Gastrocnemius medialis (tissue), 4 donors: ENCODE measurements at regions of chr19 and their contacts with region 1.

Region 1: DNA sequence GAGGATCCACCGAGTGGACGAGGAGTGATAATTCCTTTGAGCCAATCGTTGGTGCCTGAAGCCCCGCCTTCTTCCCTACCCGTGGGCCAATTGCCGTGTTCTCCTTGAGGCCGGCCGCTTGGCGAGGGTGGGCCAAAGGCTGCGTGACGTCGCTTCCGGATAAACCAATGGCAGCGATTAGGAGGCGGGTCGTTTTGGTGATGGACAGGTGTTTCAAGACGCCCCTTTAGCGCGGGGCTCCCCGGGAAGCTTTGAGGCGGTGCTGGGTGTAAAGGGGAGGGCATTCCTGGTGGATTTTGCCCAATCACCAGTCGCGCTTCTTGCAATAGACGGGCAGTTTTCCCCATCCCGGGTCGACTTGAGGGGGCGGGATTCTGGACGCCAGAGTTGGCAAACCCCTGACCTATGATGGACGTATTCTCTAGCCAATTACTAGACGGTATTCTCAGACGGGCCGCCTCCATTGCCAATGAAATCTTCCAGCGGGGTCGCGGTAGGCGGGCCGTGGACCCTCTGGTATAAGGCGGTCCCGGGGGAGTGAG is 310 bp upstream of the PRMT1 start:
- DNase-seq: peak; percentile 100
- ATAC-seq: peak; percentile 75 to 83
- H3K4me3 ChIP-seq: peak overlapping the region; percentile 78 to 99 (median 95)
- H3K27ac ChIP-seq: peak overlapping the region; percentile 98 to 100 (median 99)
- H3K4me1 ChIP-seq: peaks cover 42 to 53% of the 10 kb centered on the region in 2 donors
- H3K27me3 ChIP-seq: no peaks in the 10 kb centered on the region
- CTCF ChIP-seq: no peak
- POLR2A ChIP-seq: no peak

Region 2: GRCh38 chr19:48965806-48966540 is 710.8 kb before region 1 on chr19:
- in situ Hi-C with region 1: no loop called
- intact Hi-C with region 1: no loop called
- DNase-seq: peak; percentile 89 to 93
- ATAC-seq: peak; percentile 65 to 70
- H3K4me3 ChIP-seq: peak overlapping the region; percentile 95 to 97 (median 96)
- H3K27ac ChIP-seq: peak overlapping the region; percentile 89 to 99 (median 98)
- H3K4me1 ChIP-seq: peaks cover 35 to 48% of the 10 kb centered on the region in 2 donors
- H3K27me3 ChIP-seq: no peaks in the 10 kb centered on the region
- CTCF ChIP-seq: no peak
- POLR2A ChIP-seq: no peak

Region 3: GRCh38 chr19:49451430-49452181 is 225.2 kb before region 1 on chr19 and contains the start of gene PIH1D1:
- in situ Hi-C with region 1: no loop called
- intact Hi-C with region 1: loop called (anchors 2 kb)
- DNase-seq: peak; percentile 99
- ATAC-seq: peak; percentile 87 to 89
- H3K4me3 ChIP-seq: peak within 1 kb of the TSS; percentile 67 to 100 (median 90)
- H3K27ac ChIP-seq: peak within 1 kb of the TSS; percentile 90 to 97 (median 96)
- H3K4me1 ChIP-seq: peaks cover 15 to 26% of the 10 kb centered on the region in 2 donors
- H3K27me3 ChIP-seq: no peaks in the 10 kb centered on the region
- CTCF ChIP-seq: peak in 3 of 5 experiments; percentile 9 to 46 (median 35)
- POLR2A ChIP-seq: peak in 1 of 2 donors; percentile 53
- total RNA-seq, gene PIH1D1: 41.9 to 107 (median 79.0) TPM

Region 4: GRCh38 chr19:49506575-49507105 is 170.1 kb before region 1 on chr19:
- in situ Hi-C with region 1: loop called in 1 of 4 experiments (anchors 5 kb)
- intact Hi-C with region 1: loop called (anchors 1 kb)
- DNase-seq: peak in 1 of 2 donors; percentile 50
- ATAC-seq: peak; percentile 25 to 71
- H3K4me3 ChIP-seq: no peak overlapping the region
- H3K27ac ChIP-seq: no peak overlapping the region
- H3K4me1 ChIP-seq: peaks cover 5 to 7% of the 10 kb centered on the region in 2 donors
- H3K27me3 ChIP-seq: no peaks in the 10 kb centered on the region
- CTCF ChIP-seq: peak; percentile 72 to 93 (median 81)
- POLR2A ChIP-seq: no peak

Region 5: DNA sequence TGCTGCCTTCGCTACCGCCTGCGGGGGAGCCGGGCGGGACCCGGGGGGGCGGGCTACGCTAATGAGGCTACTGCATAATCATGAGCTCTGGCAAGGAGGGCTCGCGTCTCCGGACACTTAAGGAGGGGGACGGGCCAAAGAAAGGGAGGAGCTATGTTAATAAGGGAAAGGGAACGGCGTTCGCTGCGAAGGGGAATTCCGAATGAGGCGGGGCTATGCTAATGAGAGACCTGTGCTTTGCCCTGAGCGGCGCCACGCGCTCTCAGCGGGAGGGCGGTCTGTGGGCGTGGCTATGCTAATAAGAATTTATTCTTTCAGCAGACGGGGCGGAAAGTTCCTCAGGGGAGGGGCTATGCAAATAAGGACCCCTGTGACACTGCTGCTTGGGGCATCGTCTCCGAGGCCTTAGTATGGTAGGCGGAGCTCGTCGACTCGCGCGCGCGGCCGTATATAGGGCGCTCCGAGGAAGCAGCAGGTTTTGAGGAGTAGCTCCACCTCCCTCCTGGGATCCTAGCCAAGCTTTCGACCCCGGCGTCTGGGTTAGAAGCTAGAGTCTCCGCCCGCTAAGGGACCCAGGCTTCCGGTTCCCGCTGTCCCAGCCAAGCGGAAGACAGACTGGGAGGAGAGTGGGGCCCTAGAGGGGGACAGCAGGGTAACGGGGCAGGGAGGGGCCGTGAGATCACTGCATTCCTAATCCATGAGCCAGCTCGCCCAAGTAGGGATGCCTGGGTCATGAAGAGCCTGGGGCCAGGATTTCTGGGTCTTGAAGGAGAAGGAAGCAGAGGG is 36.5 kb before region 1 on chr19 and contains the start of gene RRAS:
- in situ Hi-C with region 1: no loop called
- intact Hi-C with region 1: loop called (anchors 1 kb)
- DNase-seq: peak; percentile 100
- ATAC-seq: peak; percentile 74 to 76
- H3K4me3 ChIP-seq: peak within 1 kb of the TSS; percentile 64 to 95 (median 80)
- H3K27ac ChIP-seq: peak within 1 kb of the TSS; percentile 93 to 99 (median 97)
- H3K4me1 ChIP-seq: peaks cover 31 to 37% of the 10 kb centered on the region in 2 donors
- H3K27me3 ChIP-seq: no peaks in the 10 kb centered on the region
- CTCF ChIP-seq: no peak
- POLR2A ChIP-seq: peak; percentile 84 to 94
- total RNA-seq, gene RRAS: 12.4 to 26.2 (median 24.2) TPM

Region 6: GRCh38 chr19:49741210-49741844 is 64.6 kb after region 1 on chr19:
- in situ Hi-C with region 1: no loop called
- intact Hi-C with region 1: no loop called
- DNase-seq: no peak
- ATAC-seq: no peak
- H3K4me3 ChIP-seq: no peak overlapping the region
- H3K27ac ChIP-seq: no peak overlapping the region
- H3K4me1 ChIP-seq: no peaks in the 10 kb centered on the region
- H3K27me3 ChIP-seq: no peaks in the 10 kb centered on the region
- CTCF ChIP-seq: no peak
- POLR2A ChIP-seq: no peak

Region 7: GRCh38 chr19:49866933-49867782 is 190.4 kb after region 1 on chr19 and contains the start of gene PNKP:
- in situ Hi-C with region 1: no loop called
- intact Hi-C with region 1: loop called (anchors 1 kb)
- DNase-seq: peak; percentile 83 to 84
- ATAC-seq: peak; percentile 66 to 69
- H3K4me3 ChIP-seq: peak within 1 kb of the TSS; percentile 73 to 99 (median 88)
- H3K27ac ChIP-seq: peak within 1 kb of the TSS; percentile 96 to 99 (median 98)
- H3K4me1 ChIP-seq: peaks cover 45 to 47% of the 10 kb centered on the region in 2 donors
- H3K27me3 ChIP-seq: no peaks in the 10 kb centered on the region
- CTCF ChIP-seq: no peak
- POLR2A ChIP-seq: peak; percentile 69 to 72
- total RNA-seq, gene PNKP: 14.9 to 43.4 (median 21.1) TPM